T-cell (primary cell): ENCODE measurements at regions of chr10 and their contacts with region 1.

Region 1: GRCh38 chr10:27241652-27242472 is 1.3 kb upstream of the ACBD5 start:
- DNase-seq: peak; percentile 66 to 94 (median 80)
- ATAC-seq: peak; percentile 69 to 80 (median 74)
- H3K4me3 ChIP-seq: peak overlapping the region; percentile 96
- H3K4me3 Mint-ChIP-seq: peak overlapping the region; percentile 93 to 98 (median 98)
- H3K27ac ChIP-seq: peak overlapping the region; percentile 97
- H3K27ac Mint-ChIP-seq: peak overlapping the region; percentile 96 to 99
- H3K4me1 ChIP-seq: peaks cover 15 to 39% of the 10 kb centered on the region in 2 experiments
- H3K4me1 Mint-ChIP-seq: peaks cover 36 to 43% (median 37%) of the 10 kb centered on the region in 3 donors
- H3K27me3 ChIP-seq: no peaks in the 10 kb centered on the region
- H3K27me3 Mint-ChIP-seq: no peaks in the 10 kb centered on the region

Region 2: GRCh38 chr10:27155066-27155754 is 86.7 kb before region 1 on chr10 and contains the start of gene MASTL:
- CTCF ChIA-PET with region 1: interaction called in 1 of 2 experiments, 12 read pairs
- POLR2A ChIA-PET with region 1: interaction called, 4 to 10 read pairs
- DNase-seq: peak; percentile 87 to 98 (median 94)
- ATAC-seq: peak; percentile 82 to 90 (median 84)
- H3K4me3 ChIP-seq: peak within 1 kb of the TSS; percentile 65 to 100
- H3K4me3 Mint-ChIP-seq: peak within 1 kb of the TSS; percentile 96 to 100 (median 99)
- H3K27ac ChIP-seq: peak within 1 kb of the TSS; percentile 95
- H3K27ac Mint-ChIP-seq: peak within 1 kb of the TSS; percentile 100
- H3K4me1 ChIP-seq: peaks cover 12 to 39% of the 10 kb centered on the region in 2 experiments
- H3K4me1 Mint-ChIP-seq: peaks cover 49 to 65% (median 52%) of the 10 kb centered on the region in 3 donors
- H3K27me3 ChIP-seq: no peaks in the 10 kb centered on the region
- H3K27me3 Mint-ChIP-seq: no peaks in the 10 kb centered on the region
- total RNA-seq, gene MASTL: 4.2 to 21.2 (median 10.4) TPM

Region 3: DNA sequence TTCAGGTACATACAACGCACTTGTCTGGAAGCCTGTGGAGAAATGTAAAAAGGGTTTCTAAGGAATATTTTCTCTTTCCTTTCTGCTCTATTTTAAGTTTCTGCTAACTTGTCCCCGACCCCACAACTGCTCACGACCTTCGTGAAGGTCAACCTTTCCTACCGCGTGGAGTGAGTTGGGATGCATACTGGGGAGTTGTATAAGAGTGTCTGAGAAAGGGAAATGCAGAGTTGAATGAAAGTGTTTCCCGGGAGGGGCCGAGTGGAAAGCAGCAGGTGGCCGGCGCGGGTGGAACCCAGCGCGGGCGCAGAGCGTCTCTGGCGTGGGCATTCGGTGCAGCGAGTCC is 16.6 kb after region 1 on chr10:
- CTCF ChIA-PET with region 1: interaction called, 3 to 11 read pairs
- POLR2A ChIA-PET with region 1: interaction called in 1 of 2 experiments, 4 read pairs
- DNase-seq: no peak
- ATAC-seq: peak in 1 of 4 experiments; percentile 17
- H3K4me3 ChIP-seq: peak overlapping the region; percentile 44 to 71
- H3K4me3 Mint-ChIP-seq: peak overlapping the region; percentile 79 to 97 (median 84)
- H3K27ac ChIP-seq: no peak overlapping the region
- H3K27ac Mint-ChIP-seq: peak overlapping the region in 1 of 2 donors; percentile 23
- H3K4me1 ChIP-seq: peaks cover 5 to 26% of the 10 kb centered on the region in 2 experiments
- H3K4me1 Mint-ChIP-seq: peaks cover 25 to 31% (median 28%) of the 10 kb centered on the region in 3 donors
- H3K27me3 ChIP-seq: peaks cover 0 to 32% of the 10 kb centered on the region in 2 experiments
- H3K27me3 Mint-ChIP-seq: peaks cover 29 to 42% of the 10 kb centered on the region in 2 donors

Region 4: GRCh38 chr10:28367929-28368484 is 1126.1 kb after region 1 on chr10:
- CTCF ChIA-PET with region 1: no interaction called
- POLR2A ChIA-PET with region 1: no interaction called
- DNase-seq: peak; percentile 20 to 87 (median 54)
- ATAC-seq: peak; percentile 96 to 98 (median 98)
- H3K4me3 ChIP-seq: peak overlapping the region in 1 of 2 donors; percentile 32
- H3K4me3 Mint-ChIP-seq: peak overlapping the region; percentile 40 to 73 (median 54)
- H3K27ac ChIP-seq: peak overlapping the region; percentile 72
- H3K27ac Mint-ChIP-seq: peak overlapping the region; percentile 95 to 100
- H3K4me1 ChIP-seq: peaks cover 34 to 56% of the 10 kb centered on the region in 2 experiments
- H3K4me1 Mint-ChIP-seq: peaks cover 53 to 68% (median 62%) of the 10 kb centered on the region in 3 donors
- H3K27me3 ChIP-seq: no peaks in the 10 kb centered on the region
- H3K27me3 Mint-ChIP-seq: no peaks in the 10 kb centered on the region

Region 5: DNA sequence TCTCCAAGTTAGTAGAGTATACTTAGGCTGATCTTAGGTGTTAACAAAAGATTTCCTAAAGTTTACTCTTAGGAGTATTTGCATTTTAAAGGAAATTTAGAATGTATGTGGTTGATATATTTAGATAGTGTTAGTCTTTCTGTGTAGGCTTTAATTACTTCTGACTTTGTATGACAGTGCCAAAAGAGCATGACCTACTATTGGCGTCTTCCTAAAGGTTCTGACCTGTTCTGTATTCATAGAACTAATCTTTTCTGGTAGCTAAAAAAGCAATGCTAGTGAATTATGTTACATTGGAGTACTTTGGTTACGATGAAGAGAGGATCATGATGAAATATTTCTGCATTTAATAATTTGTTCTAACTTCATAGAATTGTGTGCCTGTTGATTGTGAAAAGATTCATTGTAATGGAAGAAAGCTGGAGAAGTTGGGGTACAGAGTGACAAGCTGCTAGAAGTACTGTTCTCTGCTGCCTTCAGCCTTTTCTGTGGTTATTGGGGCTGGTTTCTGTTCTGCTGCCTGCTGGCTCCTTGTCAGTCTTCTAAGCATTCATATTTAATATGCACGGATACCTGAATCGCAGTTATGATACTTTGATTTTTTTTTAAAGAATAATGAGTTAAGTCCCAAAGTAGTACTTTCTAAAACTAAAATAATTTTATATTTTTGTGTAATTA is 1304.2 kb after region 1 on chr10:
- CTCF ChIA-PET with region 1: no interaction called
- POLR2A ChIA-PET with region 1: interaction called in 1 of 2 experiments, 14 read pairs
- DNase-seq: peak in 1 of 35 experiments; percentile 8
- ATAC-seq: peak in 1 of 4 experiments; percentile 53
- H3K4me3 ChIP-seq: no peak overlapping the region
- H3K4me3 Mint-ChIP-seq: peak overlapping the region in 1 of 3 donors; percentile 41
- H3K27ac ChIP-seq: no peak overlapping the region
- H3K27ac Mint-ChIP-seq: peak overlapping the region in 1 of 2 donors; percentile 41
- H3K4me1 ChIP-seq: peaks cover 15 to 31% of the 10 kb centered on the region in 2 experiments
- H3K4me1 Mint-ChIP-seq: peaks cover 81 to 84% (median 83%) of the 10 kb centered on the region in 3 donors
- H3K27me3 ChIP-seq: no peaks in the 10 kb centered on the region
- H3K27me3 Mint-ChIP-seq: no peaks in the 10 kb centered on the region